ENCODE measurements at regions of chr3 and their contacts with region 1.

Region 1: DNA sequence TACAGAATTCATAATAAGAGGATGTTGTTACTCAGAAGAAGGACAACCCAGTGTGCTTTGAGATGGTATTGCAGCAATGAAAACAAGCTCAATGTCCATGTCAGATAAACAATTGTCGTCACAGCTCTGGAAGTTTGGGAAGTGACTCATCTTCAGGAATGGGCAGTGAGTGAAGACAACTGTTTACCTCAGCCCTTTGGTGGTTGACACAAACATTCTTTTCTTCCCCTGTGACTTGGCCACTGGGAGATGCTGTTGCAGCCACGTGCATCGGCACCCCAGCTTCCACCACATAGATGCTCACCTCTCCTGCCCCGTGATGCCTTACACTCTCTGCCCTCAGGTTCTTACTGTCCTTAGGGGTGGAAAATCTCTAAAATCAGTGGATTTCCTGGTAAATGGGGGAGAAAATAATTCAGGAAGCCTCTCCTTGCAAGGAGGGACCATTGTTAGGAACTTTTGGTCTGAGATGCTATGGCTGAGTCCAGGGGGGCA is 114.1 kb upstream of the GALNT15 start:
- DNase-seq: peak; percentile 82
- H3K4me3 ChIP-seq: no peak overlapping the region
- H3K27ac ChIP-seq: peak overlapping the region; percentile 97
- H3K4me1 ChIP-seq: peaks cover 57% of the 10 kb centered on the region
- H3K27me3 ChIP-seq: no peaks in the 10 kb centered on the region
- CTCF ChIP-seq: peak; percentile 4 to 45
- POLR2A ChIP-seq: peak; percentile 35

Region 2: DNA sequence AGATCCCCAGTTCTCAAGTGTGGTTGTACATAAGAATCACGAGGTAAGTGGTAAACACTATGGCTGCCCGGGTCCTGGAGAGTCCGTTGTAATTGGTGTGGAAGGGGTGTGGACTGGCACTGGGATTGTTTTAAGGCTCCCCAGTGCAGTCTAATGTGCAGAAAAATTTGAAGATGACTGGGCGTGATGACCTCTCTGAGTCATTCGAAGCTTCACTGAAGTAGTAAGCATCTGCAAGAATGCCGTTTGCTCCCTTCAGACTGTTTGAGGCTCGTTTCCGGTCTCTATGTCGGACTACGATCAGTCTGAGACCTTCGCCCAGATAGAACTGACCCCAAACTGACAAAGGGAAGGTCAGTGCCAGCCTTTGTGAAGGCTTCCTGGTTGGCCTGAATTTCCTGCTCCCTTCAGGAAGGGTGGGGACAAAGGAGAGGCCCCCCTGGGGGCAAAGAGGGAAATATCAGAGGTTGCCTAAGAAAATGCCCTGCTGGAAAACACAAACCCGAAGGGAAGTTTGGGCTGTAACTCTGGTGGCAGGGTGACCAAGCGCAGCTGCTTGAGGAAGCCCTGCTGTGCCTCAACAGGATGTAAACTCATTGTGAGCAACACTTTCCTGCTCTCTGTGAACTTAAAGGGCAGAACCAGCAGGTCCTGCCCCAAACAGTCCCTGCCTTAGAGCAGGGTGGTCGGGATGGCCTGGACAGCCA is 424.2 kb before region 1 on chr3:
- CTCF ChIA-PET with region 1: no interaction called
- POLR2A ChIA-PET with region 1: interaction called, 3 read pairs
- dilution Hi-C with region 1: loop called (anchors 25 kb)
- intact Hi-C with region 1: loop called (anchors 1 kb)
- DNase-seq: peak; percentile 96
- H3K4me3 ChIP-seq: no peak overlapping the region
- H3K27ac ChIP-seq: peak overlapping the region; percentile 93
- H3K4me1 ChIP-seq: peaks cover 73% of the 10 kb centered on the region
- H3K27me3 ChIP-seq: no peaks in the 10 kb centered on the region
- CTCF ChIP-seq: peak in 1 of 2 donors; percentile 5
- POLR2A ChIP-seq: peak; percentile 87

Region 3: GRCh38 chr3:15797642-15798303 is 262.6 kb before region 1 on chr3 and contains the start of gene ANKRD28:
- CTCF ChIA-PET with region 1: no interaction called
- POLR2A ChIA-PET with region 1: interaction called, 3 read pairs
- dilution Hi-C with region 1: no loop called
- intact Hi-C with region 1: loop called (anchors 2 kb)
- DNase-seq: peak; percentile 95
- H3K4me3 ChIP-seq: peak within 1 kb of the TSS; percentile 26 to 100 (median 84)
- H3K27ac ChIP-seq: peak within 1 kb of the TSS; percentile 96
- H3K4me1 ChIP-seq: peaks cover 26% of the 10 kb centered on the region
- H3K27me3 ChIP-seq: no peaks in the 10 kb centered on the region
- CTCF ChIP-seq: peak in 1 of 2 donors; percentile 31
- POLR2A ChIP-seq: no peak
- total RNA-seq, gene ANKRD28: 82.2 and 97.3 TPM in 2 replicates

Region 4: GRCh38 chr3:15815696-15816095 is 244.7 kb before region 1 on chr3:
- CTCF ChIA-PET with region 1: no interaction called
- POLR2A ChIA-PET with region 1: no interaction called
- dilution Hi-C with region 1: no loop called
- intact Hi-C with region 1: no loop called
- DNase-seq: peak; percentile 61
- H3K4me3 ChIP-seq: no peak overlapping the region
- H3K27ac ChIP-seq: no peak overlapping the region
- H3K4me1 ChIP-seq: no peaks in the 10 kb centered on the region
- H3K27me3 ChIP-seq: no peaks in the 10 kb centered on the region
- CTCF ChIP-seq: peak; percentile 5 to 21
- POLR2A ChIP-seq: no peak

Region 5: DNA sequence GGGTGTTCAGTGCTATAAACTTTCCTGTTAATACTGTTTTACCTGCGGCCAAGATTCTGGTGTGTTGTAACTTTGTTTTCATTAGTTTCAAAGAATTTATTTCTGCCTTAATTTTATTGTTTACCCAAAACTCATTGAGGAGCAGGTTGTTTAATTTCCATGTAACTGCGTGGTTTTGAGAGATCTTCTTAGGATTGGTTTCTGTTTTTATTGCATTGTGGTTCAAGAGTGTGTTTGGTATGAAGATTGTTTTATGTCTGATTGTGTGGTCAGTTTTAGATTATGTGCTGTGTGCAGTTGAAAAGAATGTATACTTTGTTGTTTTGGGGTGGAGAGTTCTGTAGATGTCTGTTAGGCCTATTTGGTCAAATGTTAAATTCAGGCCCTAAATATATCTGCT is 19.4 kb before region 1 on chr3:
- CTCF ChIA-PET with region 1: no interaction called
- POLR2A ChIA-PET with region 1: no interaction called
- dilution Hi-C with region 1: no loop called
- intact Hi-C with region 1: no loop called
- DNase-seq: no peak
- H3K4me3 ChIP-seq: no peak overlapping the region
- H3K27ac ChIP-seq: no peak overlapping the region
- H3K4me1 ChIP-seq: no peaks in the 10 kb centered on the region
- H3K27me3 ChIP-seq: peaks cover 0 to 2% of the 10 kb centered on the region in 2 experiments
- CTCF ChIP-seq: no peak
- POLR2A ChIP-seq: no peak

Region 6: GRCh38 chr3:16140116-16140893 is 79.9 kb after region 1 on chr3:
- CTCF ChIA-PET with region 1: interaction called, 11 read pairs
- POLR2A ChIA-PET with region 1: no interaction called
- dilution Hi-C with region 1: no loop called
- intact Hi-C with region 1: loop called (anchors 1 kb)
- DNase-seq: peak; percentile 91
- H3K4me3 ChIP-seq: no peak overlapping the region
- H3K27ac ChIP-seq: peak overlapping the region; percentile 83
- H3K4me1 ChIP-seq: peaks cover 16% of the 10 kb centered on the region
- H3K27me3 ChIP-seq: no peaks in the 10 kb centered on the region
- CTCF ChIP-seq: no peak
- POLR2A ChIP-seq: peak; percentile 19

Region 7: GRCh38 chr3:16177962-16178627 is 117.7 kb after region 1 on chr3:
- CTCF ChIA-PET with region 1: interaction called, 24 read pairs
- POLR2A ChIA-PET with region 1: interaction called, 4 read pairs
- dilution Hi-C with region 1: no loop called
- intact Hi-C with region 1: loop called (anchors 1 kb)
- DNase-seq: peak; percentile 74
- H3K4me3 ChIP-seq: no peak overlapping the region
- H3K27ac ChIP-seq: no peak overlapping the region
- H3K4me1 ChIP-seq: peaks cover 11% of the 10 kb centered on the region
- H3K27me3 ChIP-seq: peaks cover 0 to 2% of the 10 kb centered on the region in 2 experiments
- CTCF ChIP-seq: peak; percentile 98 to 100
- POLR2A ChIP-seq: peak; percentile 14

Region 8: DNA sequence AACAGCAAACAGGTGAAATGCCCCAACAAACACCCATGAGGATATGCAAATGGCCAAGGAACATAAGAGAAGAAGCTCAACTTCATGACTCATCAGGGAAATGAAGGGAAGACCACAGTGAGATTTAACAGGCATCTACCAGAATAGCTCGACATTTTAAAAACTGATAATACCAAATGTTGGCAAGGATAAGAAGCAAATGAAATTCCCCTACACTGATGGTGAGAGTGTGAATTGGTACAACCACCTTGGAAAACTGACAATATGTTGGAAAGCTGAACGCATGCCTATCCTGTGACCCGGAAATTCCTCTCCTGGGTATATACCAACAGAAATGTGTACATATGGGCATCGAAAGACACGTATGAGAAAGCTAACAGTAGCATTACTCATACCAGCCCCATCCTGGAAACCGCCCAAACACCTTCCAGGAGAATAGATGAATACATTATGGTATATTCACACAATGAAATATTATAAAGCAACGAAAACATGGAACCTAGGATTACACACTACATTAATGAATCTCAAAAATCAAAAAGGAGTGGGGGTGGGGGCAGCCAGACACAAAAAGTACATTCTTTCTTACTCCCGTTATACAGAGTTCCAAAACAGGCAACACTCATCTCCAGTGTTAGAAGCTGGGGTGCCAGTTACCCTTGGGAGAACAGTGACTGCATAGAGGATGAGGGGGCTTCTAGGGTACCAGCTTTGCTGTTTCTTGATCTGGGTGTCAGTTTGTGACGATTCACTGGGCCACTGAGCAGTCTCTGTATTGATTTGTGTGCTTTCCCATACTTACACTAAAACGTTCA is 436.2 kb after region 1 on chr3:
- CTCF ChIA-PET with region 1: no interaction called
- POLR2A ChIA-PET with region 1: no interaction called
- dilution Hi-C with region 1: no loop called
- intact Hi-C with region 1: loop called (anchors 5 kb)
- DNase-seq: no peak
- H3K4me3 ChIP-seq: no peak overlapping the region
- H3K27ac ChIP-seq: no peak overlapping the region
- H3K4me1 ChIP-seq: peaks cover 28% of the 10 kb centered on the region
- H3K27me3 ChIP-seq: no peaks in the 10 kb centered on the region
- CTCF ChIP-seq: no peak
- POLR2A ChIP-seq: no peak